Activated B cell treated with CpG ODN at 0.5 μM for 24 hours (primary cell): ENCODE measurements at regions of chr7 and their contacts with region 1.

Region 1: DNA sequence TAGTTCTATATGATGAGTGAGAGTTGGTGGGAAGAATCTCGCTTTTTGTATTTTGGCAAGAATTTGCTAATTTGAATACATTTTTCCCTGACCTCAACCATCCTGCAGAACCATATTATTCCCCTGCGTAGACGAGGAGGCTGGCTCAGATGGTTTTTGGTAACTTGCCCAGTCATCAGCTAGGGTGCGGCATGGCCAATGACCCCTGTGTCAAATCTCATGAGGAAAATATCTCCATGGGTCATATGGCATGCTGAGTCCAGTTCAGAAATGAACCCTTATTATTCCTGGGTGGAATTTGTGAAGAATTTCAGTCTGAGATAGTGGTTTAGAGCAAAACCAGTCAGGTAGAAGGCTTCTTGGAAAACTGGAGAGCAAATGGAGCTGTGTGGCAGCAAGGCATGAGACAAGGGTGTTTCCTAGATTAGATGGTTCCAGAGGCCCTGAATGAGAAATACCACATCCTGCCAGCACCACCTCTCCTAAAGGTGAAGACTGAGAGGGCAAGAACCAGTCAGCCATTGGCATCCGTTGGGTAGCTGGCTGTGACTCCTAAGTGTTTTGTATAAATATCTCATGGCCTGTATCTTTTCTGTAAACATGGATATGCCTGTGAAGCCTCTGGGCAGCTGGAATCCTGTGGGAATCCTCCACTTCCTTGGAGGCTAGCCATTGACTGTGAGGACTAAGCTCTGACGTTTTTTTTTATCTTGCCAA is 5.8 kb upstream of the UPP1 start:
- DNase-seq: no peak
- ATAC-seq: no peak
- H3K4me3 Mint-ChIP-seq: no peak overlapping the region
- H3K27ac Mint-ChIP-seq: no peak overlapping the region
- H3K4me1 Mint-ChIP-seq: peaks cover 40% of the 10 kb centered on the region
- H3K27me3 Mint-ChIP-seq: peaks cover 8% of the 10 kb centered on the region
- CTCF ChIP-seq: no peak

Region 2: DNA sequence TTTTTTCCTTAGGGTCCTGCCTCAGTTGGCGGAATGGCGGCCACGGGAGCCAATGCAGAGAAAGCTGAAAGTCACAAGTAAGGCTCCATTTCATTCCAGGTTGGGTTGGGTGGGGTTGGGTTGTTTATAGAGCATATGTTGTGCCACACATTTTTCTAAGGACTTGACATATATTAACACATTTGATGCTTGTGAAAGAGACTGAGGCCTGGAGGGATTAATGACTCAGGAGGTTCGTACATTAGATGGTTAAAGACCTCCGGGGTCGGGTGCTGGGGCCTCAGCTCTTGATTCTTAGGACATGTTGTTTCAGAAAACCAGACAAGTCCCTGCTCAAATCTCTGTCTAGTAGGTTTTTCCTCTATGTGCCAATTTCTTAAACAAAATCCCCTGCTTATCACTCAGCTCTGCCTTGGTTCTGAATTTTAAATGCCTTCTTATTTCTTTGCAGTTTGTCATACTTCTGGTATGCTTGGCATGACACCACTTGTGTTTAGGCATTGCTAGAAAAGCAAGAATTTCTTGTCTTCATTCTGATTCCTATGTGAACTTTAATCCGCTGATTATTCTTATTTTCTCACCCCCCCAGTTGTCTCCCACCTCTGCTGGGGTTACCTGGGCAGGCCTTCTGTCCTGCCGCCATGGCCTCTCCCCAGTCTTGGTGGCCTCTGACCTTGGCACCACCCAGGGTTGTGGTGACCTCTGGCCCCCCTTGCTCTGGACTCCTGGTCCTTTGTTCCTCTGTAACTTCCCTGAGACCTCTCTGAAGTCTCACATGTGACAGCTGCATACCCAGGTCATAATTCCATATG is 11.7 kb after region 1 on chr7:
- CTCF ChIA-PET with region 1: interaction called, 3 read pairs
- POLR2A ChIA-PET with region 1: no interaction called
- intact Hi-C with region 1: loop called (anchors 1 kb)
- DNase-seq: no peak
- ATAC-seq: no peak
- H3K4me3 Mint-ChIP-seq: no peak overlapping the region
- H3K27ac Mint-ChIP-seq: no peak overlapping the region
- H3K4me1 Mint-ChIP-seq: peaks cover 11% of the 10 kb centered on the region
- H3K27me3 Mint-ChIP-seq: no peaks in the 10 kb centered on the region
- CTCF ChIP-seq: no peak